PC-9 (cell line): ENCODE measurements at regions of chr3 and their contacts with region 1.

Region 1: DNA sequence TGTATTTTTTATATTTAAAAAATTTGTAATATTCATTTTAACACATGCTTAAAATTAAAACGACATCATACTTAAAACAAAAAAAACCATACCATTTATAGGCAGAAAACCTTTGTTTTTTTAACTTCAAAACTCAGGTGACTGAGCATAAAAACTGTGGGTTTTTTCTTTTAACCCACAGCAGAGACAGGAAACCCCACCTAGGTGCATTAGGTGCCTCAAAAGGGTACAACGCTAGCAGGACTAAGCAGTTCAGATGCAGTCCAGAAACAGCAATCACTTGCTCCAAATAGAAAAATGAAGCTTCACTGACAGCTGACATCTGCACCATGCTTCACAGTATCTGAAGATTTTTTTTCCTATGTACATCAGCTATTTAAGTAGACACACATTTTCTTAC is 52.3 kb downstream of the GLB1 start:
- DNase-seq: no peak
- H3K4me3 ChIP-seq: no peak overlapping the region
- H3K27ac ChIP-seq: no peak overlapping the region
- H3K4me1 ChIP-seq: no peaks in the 10 kb centered on the region
- H3K27me3 ChIP-seq: no peaks in the 10 kb centered on the region
- CTCF ChIP-seq: no peak

Region 2: GRCh38 chr3:32989171-32989570 is 55.5 kb before region 1 on chr3:
- CTCF ChIA-PET with region 1: no interaction called
- POLR2A ChIA-PET with region 1: interaction called, 13 read pairs
- intact Hi-C with region 1: no loop called
- DNase-seq: no peak
- H3K4me3 ChIP-seq: no peak overlapping the region
- H3K27ac ChIP-seq: no peak overlapping the region
- H3K4me1 ChIP-seq: no peaks in the 10 kb centered on the region
- H3K27me3 ChIP-seq: no peaks in the 10 kb centered on the region
- CTCF ChIP-seq: no peak

Region 3: DNA sequence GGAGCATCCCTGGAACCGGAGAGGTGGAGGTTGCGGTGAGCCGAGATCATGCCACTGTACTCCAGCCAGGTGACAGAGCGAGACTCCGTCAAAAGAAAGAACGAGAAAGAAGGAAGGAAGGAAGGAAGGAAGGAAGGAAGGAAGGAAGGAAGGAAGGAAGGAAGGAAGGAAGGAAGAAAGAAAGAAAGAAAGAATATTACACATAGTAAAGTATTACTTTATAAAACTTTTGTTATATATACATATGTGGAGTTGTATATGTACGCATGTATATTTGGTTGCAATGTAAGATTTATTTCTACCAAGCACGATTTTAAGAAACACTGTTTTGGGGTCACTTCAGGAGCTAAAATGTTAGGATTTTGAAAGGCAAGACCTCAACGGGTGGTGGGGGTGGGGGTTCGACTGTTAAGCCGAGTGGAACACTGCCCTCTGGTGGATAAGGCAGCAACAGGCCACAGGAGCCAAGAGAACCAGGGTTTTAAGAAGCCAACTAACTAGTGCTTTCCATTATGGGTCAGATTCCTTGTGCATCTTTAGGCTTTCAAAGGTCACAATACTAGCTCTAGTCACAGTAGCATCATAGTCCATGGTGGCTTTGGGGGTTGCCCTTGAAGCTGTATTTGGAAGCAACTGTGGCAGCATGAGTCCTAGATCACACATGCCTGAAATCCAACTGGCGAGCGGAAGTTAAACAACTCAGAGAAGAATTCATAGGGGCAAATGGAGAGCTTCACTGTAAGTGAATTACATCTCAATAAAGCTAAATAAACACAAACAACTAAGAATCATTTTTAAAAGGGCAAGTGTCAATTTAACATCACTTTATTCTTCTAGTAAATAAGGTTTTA is 29.8 kb after region 1 on chr3:
- CTCF ChIA-PET with region 1: no interaction called
- POLR2A ChIA-PET with region 1: no interaction called
- intact Hi-C with region 1: no loop called
- DNase-seq: peak; percentile 38 to 39
- H3K4me3 ChIP-seq: no peak overlapping the region
- H3K27ac ChIP-seq: no peak overlapping the region
- H3K4me1 ChIP-seq: no peaks in the 10 kb centered on the region
- H3K27me3 ChIP-seq: no peaks in the 10 kb centered on the region
- CTCF ChIP-seq: peak; percentile 78

Region 4: GRCh38 chr3:33115024-33115768 is 70.5 kb after region 1 on chr3:
- CTCF ChIA-PET with region 1: no interaction called
- POLR2A ChIA-PET with region 1: no interaction called
- intact Hi-C with region 1: no loop called
- DNase-seq: peak; percentile 50 to 74
- H3K4me3 ChIP-seq: peak overlapping the region; percentile 73; the same call in 1 of the 2 replicates
- H3K27ac ChIP-seq: peak overlapping the region; percentile 72
- H3K4me1 ChIP-seq: 0 out of 2 replicates have a peak, but pooled peaks cover 7% of the 10 kb centered on the region
- H3K27me3 ChIP-seq: no peaks in the 10 kb centered on the region
- CTCF ChIP-seq: no peak